ENCODE measurements at regions of chr3 and their contacts with region 1.

Region 1: GRCh38 chr3:184543843-184544512 is 17.6 kb upstream of the EPHB3 start:
- DNase-seq: peak; percentile 57 to 87 (median 68)
- ATAC-seq: peak; percentile 88
- H3K4me3 ChIP-seq: no peak overlapping the region
- H3K4me3 Mint-ChIP-seq: no peak overlapping the region
- H3K27ac ChIP-seq: no peak overlapping the region
- H3K27ac Mint-ChIP-seq: peak overlapping the region; percentile 35
- H3K4me1 ChIP-seq: peaks cover 11% of the 10 kb centered on the region
- H3K4me1 Mint-ChIP-seq: peaks cover 22% of the 10 kb centered on the region
- H3K27me3 ChIP-seq: peaks cover 5 to 7% of the 10 kb centered on the region in 2 experiments
- H3K27me3 Mint-ChIP-seq: peaks cover 22% of the 10 kb centered on the region
- CTCF ChIP-seq: peak; percentile 85

Region 2: DNA sequence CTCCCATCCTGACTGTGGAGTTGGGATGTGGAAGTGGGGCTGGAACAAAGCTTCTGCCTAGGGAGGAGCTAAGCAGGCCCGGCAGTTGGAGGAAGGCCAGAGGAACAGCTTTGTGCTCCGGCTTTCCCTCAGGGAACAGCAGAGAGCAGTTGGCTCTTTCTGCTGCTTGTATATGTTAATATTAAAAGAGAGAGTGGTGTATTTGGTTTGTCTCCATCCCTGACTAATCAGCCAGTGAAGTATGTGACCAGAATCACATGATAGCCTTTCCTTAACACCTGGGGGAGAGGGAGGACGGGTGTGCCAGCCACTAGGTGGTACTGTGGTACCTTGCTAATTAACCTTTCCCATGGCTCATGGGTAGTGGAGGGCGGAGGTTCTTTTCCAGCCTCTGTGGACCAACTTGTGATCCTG is 398.9 kb before region 1 on chr3:
- CTCF ChIA-PET with region 1: no interaction called
- POLR2A ChIA-PET with region 1: no interaction called
- intact Hi-C with region 1: loop called in 1 of 2 experiments (anchors 10 kb)
- DNase-seq: peak in 9 of 14 experiments; percentile 16 to 67 (median 48)
- ATAC-seq: peak; percentile 80
- H3K4me3 ChIP-seq: no peak overlapping the region
- H3K4me3 Mint-ChIP-seq: no peak overlapping the region
- H3K27ac ChIP-seq: no peak overlapping the region
- H3K27ac Mint-ChIP-seq: no peak overlapping the region
- H3K4me1 ChIP-seq: no peaks in the 10 kb centered on the region
- H3K4me1 Mint-ChIP-seq: no peaks in the 10 kb centered on the region
- H3K27me3 ChIP-seq: no peaks in the 10 kb centered on the region
- H3K27me3 Mint-ChIP-seq: no peaks in the 10 kb centered on the region
- CTCF ChIP-seq: peak; percentile 31

Region 3: GRCh38 chr3:184250167-184250828 is 293.7 kb before region 1 on chr3:
- CTCF ChIA-PET with region 1: no interaction called
- POLR2A ChIA-PET with region 1: no interaction called
- intact Hi-C with region 1: no loop called
- DNase-seq: peak; percentile 77 to 92 (median 86)
- ATAC-seq: peak; percentile 62
- H3K4me3 ChIP-seq: peak overlapping the region; percentile 86
- H3K4me3 Mint-ChIP-seq: peak overlapping the region; percentile 93
- H3K27ac ChIP-seq: peak overlapping the region; percentile 61 to 79
- H3K27ac Mint-ChIP-seq: peak overlapping the region; percentile 94
- H3K4me1 ChIP-seq: peaks cover 28% of the 10 kb centered on the region
- H3K4me1 Mint-ChIP-seq: peaks cover 21% of the 10 kb centered on the region
- H3K27me3 ChIP-seq: no peaks in the 10 kb centered on the region
- H3K27me3 Mint-ChIP-seq: no peaks in the 10 kb centered on the region
- CTCF ChIP-seq: peak; percentile 88

Region 4: GRCh38 chr3:184354121-184354728 is 189.8 kb before region 1 on chr3:
- CTCF ChIA-PET with region 1: no interaction called
- POLR2A ChIA-PET with region 1: no interaction called
- intact Hi-C with region 1: loop called in 1 of 2 experiments (anchors 5 kb)
- DNase-seq: peak; percentile 44 to 82 (median 57)
- ATAC-seq: peak; percentile 72
- H3K4me3 ChIP-seq: no peak overlapping the region
- H3K4me3 Mint-ChIP-seq: no peak overlapping the region
- H3K27ac ChIP-seq: no peak overlapping the region
- H3K27ac Mint-ChIP-seq: no peak overlapping the region
- H3K4me1 ChIP-seq: peaks cover 8% of the 10 kb centered on the region
- H3K4me1 Mint-ChIP-seq: no peaks in the 10 kb centered on the region
- H3K27me3 ChIP-seq: no peaks in the 10 kb centered on the region
- H3K27me3 Mint-ChIP-seq: no peaks in the 10 kb centered on the region
- CTCF ChIP-seq: peak; percentile 74

Region 5: GRCh38 chr3:184417619-184418327 is 126.2 kb before region 1 on chr3:
- CTCF ChIA-PET with region 1: no interaction called
- POLR2A ChIA-PET with region 1: interaction called, 3 read pairs
- intact Hi-C with region 1: loop called (anchors 1 kb)
- DNase-seq: peak; percentile 58 to 85 (median 64)
- ATAC-seq: peak; percentile 99
- H3K4me3 ChIP-seq: no peak overlapping the region
- H3K4me3 Mint-ChIP-seq: no peak overlapping the region
- H3K27ac ChIP-seq: no peak overlapping the region
- H3K27ac Mint-ChIP-seq: no peak overlapping the region
- H3K4me1 ChIP-seq: peaks cover 4% of the 10 kb centered on the region
- H3K4me1 Mint-ChIP-seq: no peaks in the 10 kb centered on the region
- H3K27me3 ChIP-seq: no peaks in the 10 kb centered on the region
- H3K27me3 Mint-ChIP-seq: no peaks in the 10 kb centered on the region
- CTCF ChIP-seq: peak; percentile 87

Region 6: GRCh38 chr3:184561061-184561912 is 17.3 kb after region 1 on chr3 and contains the start of gene EPHB3:
- CTCF ChIA-PET with region 1: interaction called, 16 read pairs
- POLR2A ChIA-PET with region 1: interaction called, 8 read pairs
- intact Hi-C with region 1: no loop called
- DNase-seq: peak; percentile 84 to 94 (median 86)
- ATAC-seq: peak; percentile 81
- H3K4me3 ChIP-seq: peak within 1 kb of the TSS; percentile 53
- H3K4me3 Mint-ChIP-seq: peak within 1 kb of the TSS; percentile 72
- H3K27ac ChIP-seq: no peak within 1 kb of the TSS
- H3K27ac Mint-ChIP-seq: peak within 1 kb of the TSS; percentile 50
- H3K4me1 ChIP-seq: peaks cover 61% of the 10 kb centered on the region
- H3K4me1 Mint-ChIP-seq: peaks cover 49% of the 10 kb centered on the region
- H3K27me3 ChIP-seq: peaks cover 18 to 42% of the 10 kb centered on the region in 2 experiments
- H3K27me3 Mint-ChIP-seq: peaks cover 41% of the 10 kb centered on the region
- CTCF ChIP-seq: peak; percentile 99
- total RNA-seq, gene EPHB3: 0.19 to 0.22 TPM

Region 7: DNA sequence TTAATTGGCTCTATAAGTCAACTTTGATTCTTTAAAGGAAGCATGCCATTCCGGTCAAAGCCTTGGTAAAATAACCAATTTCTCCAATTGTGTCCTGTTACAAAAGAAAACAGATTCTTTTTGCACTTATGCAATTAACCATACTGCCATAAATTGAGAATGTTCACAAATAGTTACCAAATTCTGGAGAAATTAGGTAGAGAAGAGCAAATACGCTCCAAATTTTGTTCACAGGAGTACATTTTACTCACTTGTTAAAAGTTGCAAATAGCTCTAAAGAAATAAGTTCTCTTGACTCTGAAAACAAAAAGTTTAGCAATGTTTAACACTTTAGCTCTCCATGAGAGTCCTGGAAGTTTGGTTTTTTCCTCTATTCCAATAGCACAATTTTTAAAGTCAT is 156.8 kb after region 1 on chr3:
- CTCF ChIA-PET with region 1: no interaction called
- POLR2A ChIA-PET with region 1: no interaction called
- intact Hi-C with region 1: no loop called
- DNase-seq: no peak
- ATAC-seq: no peak
- H3K4me3 ChIP-seq: no peak overlapping the region
- H3K4me3 Mint-ChIP-seq: no peak overlapping the region
- H3K27ac ChIP-seq: no peak overlapping the region
- H3K27ac Mint-ChIP-seq: no peak overlapping the region
- H3K4me1 ChIP-seq: no peaks in the 10 kb centered on the region
- H3K4me1 Mint-ChIP-seq: no peaks in the 10 kb centered on the region
- H3K27me3 ChIP-seq: no peaks in the 10 kb centered on the region
- H3K27me3 Mint-ChIP-seq: no peaks in the 10 kb centered on the region
- CTCF ChIP-seq: no peak

Region 8: GRCh38 chr3:184740524-184741484 is 196.8 kb after region 1 on chr3:
- CTCF ChIA-PET with region 1: no interaction called
- POLR2A ChIA-PET with region 1: no interaction called
- intact Hi-C with region 1: no loop called
- DNase-seq: peak in 2 of 14 experiments; percentile 20 to 34
- ATAC-seq: no peak
- H3K4me3 ChIP-seq: no peak overlapping the region
- H3K4me3 Mint-ChIP-seq: no peak overlapping the region
- H3K27ac ChIP-seq: no peak overlapping the region
- H3K27ac Mint-ChIP-seq: no peak overlapping the region
- H3K4me1 ChIP-seq: no peaks in the 10 kb centered on the region
- H3K4me1 Mint-ChIP-seq: no peaks in the 10 kb centered on the region
- H3K27me3 ChIP-seq: peaks cover 0 to 3% of the 10 kb centered on the region in 2 experiments
- H3K27me3 Mint-ChIP-seq: peaks cover 4% of the 10 kb centered on the region
- CTCF ChIP-seq: no peak

Measured in CD4-positive, alpha-beta T cell (primary cell).